Activated CD8-positive, alpha-beta T cell treated with anti-CD3 and anti-CD28 coated beads, Interleukin-2, amount 10 ng/mL, durations not matched to agents 7 days and 5 days (primary cell): ENCODE measurements at regions of chr6 and their contacts with region 1.

Region 1: DNA sequence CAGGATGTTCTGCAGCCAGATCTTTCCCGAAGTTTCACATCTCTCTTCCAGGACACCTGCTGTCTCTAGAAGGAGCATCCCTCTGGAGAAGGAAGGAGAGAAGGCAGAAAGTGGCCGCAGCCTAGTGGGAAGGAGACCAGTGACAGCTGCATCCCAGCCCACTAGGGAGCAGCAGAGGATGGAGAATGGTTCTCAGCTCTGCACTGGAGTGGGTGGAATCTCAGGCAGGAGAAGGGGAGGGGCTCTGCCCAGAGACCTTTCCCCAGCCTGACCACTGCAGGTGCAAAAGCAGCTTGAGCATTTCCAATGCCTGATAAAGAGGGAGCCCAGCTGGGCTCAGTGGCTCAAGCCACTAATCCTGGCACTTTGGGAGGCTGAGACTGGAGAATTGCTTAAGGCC is 32.3 kb downstream of the NCR2 start:
- DNase-seq: peak; percentile 22
- ATAC-seq: no peak
- H3K4me3 Mint-ChIP-seq: no peak overlapping the region
- H3K27ac Mint-ChIP-seq: no peak overlapping the region
- H3K4me1 Mint-ChIP-seq: peaks cover 26% of the 10 kb centered on the region
- H3K27me3 Mint-ChIP-seq: peaks cover 54% of the 10 kb centered on the region

Region 2: GRCh38 chr6:41306187-41306854 is 61.4 kb before region 1 on chr6:
- CTCF ChIA-PET with region 1: interaction called, 81 read pairs
- POLR2A ChIA-PET with region 1: no interaction called
- DNase-seq: peak; percentile 71
- ATAC-seq: peak; percentile 60
- H3K4me3 Mint-ChIP-seq: no peak overlapping the region
- H3K27ac Mint-ChIP-seq: no peak overlapping the region
- H3K4me1 Mint-ChIP-seq: peaks cover 22% of the 10 kb centered on the region
- H3K27me3 Mint-ChIP-seq: peaks cover 40% of the 10 kb centered on the region

Region 3: DNA sequence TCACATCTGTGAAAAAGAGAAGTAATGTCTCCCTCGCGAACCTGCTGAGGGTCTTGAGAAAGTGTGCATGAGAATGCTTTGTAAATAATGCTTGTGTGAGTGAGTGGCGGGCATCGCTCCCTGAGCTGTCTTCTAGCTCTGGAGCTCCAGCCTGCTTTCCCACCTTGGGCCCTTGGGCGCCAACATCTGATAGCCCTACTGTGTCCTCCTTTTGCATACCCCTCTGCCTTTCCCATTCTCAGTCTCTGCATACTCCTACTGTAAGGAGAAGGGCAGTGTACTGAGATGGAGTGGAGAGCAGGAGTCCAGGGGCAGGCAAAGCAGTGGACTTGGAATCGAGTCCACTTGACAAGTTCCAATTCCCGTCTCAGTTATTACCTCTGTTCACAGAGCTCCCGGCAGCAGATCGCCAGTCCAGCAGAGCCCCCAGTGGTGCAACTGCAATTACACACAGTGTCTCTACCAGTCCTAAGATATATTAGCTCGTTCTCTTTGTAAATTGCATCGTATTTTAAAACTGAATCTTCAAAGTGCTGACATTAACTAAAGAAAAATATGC is 33.1 kb before region 1 on chr6:
- CTCF ChIA-PET with region 1: interaction called, 162 read pairs
- POLR2A ChIA-PET with region 1: interaction called, 8 read pairs
- DNase-seq: peak; percentile 49
- ATAC-seq: peak; percentile 4
- H3K4me3 Mint-ChIP-seq: peak overlapping the region; percentile 61
- H3K27ac Mint-ChIP-seq: peak overlapping the region; percentile 95
- H3K4me1 Mint-ChIP-seq: peaks cover 66% of the 10 kb centered on the region
- H3K27me3 Mint-ChIP-seq: no peaks in the 10 kb centered on the region

Region 4: GRCh38 chr6:41352396-41352795 is 15.3 kb before region 1 on chr6:
- CTCF ChIA-PET with region 1: interaction called, 64 read pairs
- POLR2A ChIA-PET with region 1: no interaction called
- DNase-seq: no peak
- ATAC-seq: no peak
- H3K4me3 Mint-ChIP-seq: no peak overlapping the region
- H3K27ac Mint-ChIP-seq: no peak overlapping the region
- H3K4me1 Mint-ChIP-seq: peaks cover 48% of the 10 kb centered on the region
- H3K27me3 Mint-ChIP-seq: peaks cover 8% of the 10 kb centered on the region

Region 5: GRCh38 chr6:41602864-41603608 is 235.3 kb after region 1 on chr6:
- CTCF ChIA-PET with region 1: interaction called, 12 read pairs
- POLR2A ChIA-PET with region 1: no interaction called
- DNase-seq: peak; percentile 84
- ATAC-seq: peak; percentile 89
- H3K4me3 Mint-ChIP-seq: no peak overlapping the region
- H3K27ac Mint-ChIP-seq: peak overlapping the region; percentile 18
- H3K4me1 Mint-ChIP-seq: peaks cover 4% of the 10 kb centered on the region
- H3K27me3 Mint-ChIP-seq: peaks cover 3% of the 10 kb centered on the region